ENCODE measurements at regions of chr15 and their contacts with region 1.

Region 1: DNA sequence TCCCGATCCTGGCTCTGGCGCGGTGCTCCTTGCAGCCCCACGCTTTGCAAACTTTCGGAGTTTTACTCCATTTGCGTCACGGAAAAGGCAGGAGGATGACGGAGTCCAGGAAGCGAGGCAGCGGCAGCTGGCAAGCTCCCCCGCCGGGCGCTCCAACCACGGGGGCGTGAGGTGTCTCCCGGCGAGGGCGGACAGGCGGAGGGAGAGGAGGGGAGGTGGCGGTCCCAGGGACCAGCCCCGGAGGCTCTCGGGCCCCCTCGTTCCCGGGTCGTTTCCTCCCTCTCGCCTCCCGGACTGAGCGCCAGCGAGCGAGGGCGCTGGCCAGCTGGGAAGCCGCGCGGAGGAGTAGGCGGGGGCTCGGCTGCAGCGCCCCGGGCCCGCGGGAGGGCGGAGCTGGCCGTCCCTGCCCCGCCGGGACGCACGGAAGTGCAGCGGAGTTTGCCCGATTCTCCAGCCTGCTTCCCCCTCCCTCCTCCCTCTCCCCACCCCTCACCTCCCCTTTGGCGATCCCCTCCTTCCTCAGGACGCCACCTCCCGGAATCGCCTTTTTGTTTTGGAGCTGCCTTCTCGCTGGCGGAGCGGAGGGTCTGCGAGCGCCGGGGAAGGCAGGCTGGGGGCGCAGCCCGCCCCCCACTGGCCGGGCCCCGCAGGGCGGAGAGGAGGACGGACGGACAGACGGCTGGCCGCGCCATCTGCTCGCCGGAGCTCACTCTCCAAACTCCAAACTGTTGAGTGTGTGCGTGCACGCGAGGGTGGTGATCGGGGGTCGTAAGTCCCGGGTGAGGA is at the start of gene SNX33:
- DNase-seq: peak; percentile 77
- H3K4me3 Mint-ChIP-seq: peak within 1 kb of the TSS; percentile 87
- H3K27ac Mint-ChIP-seq: peak within 1 kb of the TSS; percentile 78
- H3K4me1 Mint-ChIP-seq: peaks cover 47% of the 10 kb centered on the region
- H3K27me3 Mint-ChIP-seq: no peaks in the 10 kb centered on the region
- CTCF ChIP-seq: peak; percentile 48
- total RNA-seq, gene SNX33: 14.3 and 15.2 TPM in 2 replicates

Region 2: GRCh38 chr15:74732846-74733245 is 914.7 kb before region 1 on chr15:
- CTCF ChIA-PET with region 1: no interaction called
- POLR2A ChIA-PET with region 1: no interaction called
- intact Hi-C with region 1: no loop called
- DNase-seq: no peak
- H3K4me3 Mint-ChIP-seq: no peak overlapping the region
- H3K27ac Mint-ChIP-seq: no peak overlapping the region
- H3K4me1 Mint-ChIP-seq: no peaks in the 10 kb centered on the region
- H3K27me3 Mint-ChIP-seq: peaks cover 28% of the 10 kb centered on the region
- CTCF ChIP-seq: no peak

Region 3: GRCh38 chr15:74857082-74857655 is 790.4 kb before region 1 on chr15:
- CTCF ChIA-PET with region 1: no interaction called
- POLR2A ChIA-PET with region 1: no interaction called
- intact Hi-C with region 1: no loop called
- DNase-seq: no peak
- H3K4me3 Mint-ChIP-seq: no peak overlapping the region
- H3K27ac Mint-ChIP-seq: no peak overlapping the region
- H3K4me1 Mint-ChIP-seq: no peaks in the 10 kb centered on the region
- H3K27me3 Mint-ChIP-seq: no peaks in the 10 kb centered on the region
- CTCF ChIP-seq: no peak

Region 4: GRCh38 chr15:75661091-75661777 is 13.7 kb after region 1 on chr15:
- CTCF ChIA-PET with region 1: interaction called, 9 read pairs
- POLR2A ChIA-PET with region 1: interaction called, 120 read pairs
- intact Hi-C with region 1: no loop called
- DNase-seq: peak; percentile 89
- H3K4me3 Mint-ChIP-seq: peak overlapping the region; percentile 40
- H3K27ac Mint-ChIP-seq: peak overlapping the region; percentile 97
- H3K4me1 Mint-ChIP-seq: peaks cover 47% of the 10 kb centered on the region
- H3K27me3 Mint-ChIP-seq: no peaks in the 10 kb centered on the region
- CTCF ChIP-seq: no peak

Region 5: DNA sequence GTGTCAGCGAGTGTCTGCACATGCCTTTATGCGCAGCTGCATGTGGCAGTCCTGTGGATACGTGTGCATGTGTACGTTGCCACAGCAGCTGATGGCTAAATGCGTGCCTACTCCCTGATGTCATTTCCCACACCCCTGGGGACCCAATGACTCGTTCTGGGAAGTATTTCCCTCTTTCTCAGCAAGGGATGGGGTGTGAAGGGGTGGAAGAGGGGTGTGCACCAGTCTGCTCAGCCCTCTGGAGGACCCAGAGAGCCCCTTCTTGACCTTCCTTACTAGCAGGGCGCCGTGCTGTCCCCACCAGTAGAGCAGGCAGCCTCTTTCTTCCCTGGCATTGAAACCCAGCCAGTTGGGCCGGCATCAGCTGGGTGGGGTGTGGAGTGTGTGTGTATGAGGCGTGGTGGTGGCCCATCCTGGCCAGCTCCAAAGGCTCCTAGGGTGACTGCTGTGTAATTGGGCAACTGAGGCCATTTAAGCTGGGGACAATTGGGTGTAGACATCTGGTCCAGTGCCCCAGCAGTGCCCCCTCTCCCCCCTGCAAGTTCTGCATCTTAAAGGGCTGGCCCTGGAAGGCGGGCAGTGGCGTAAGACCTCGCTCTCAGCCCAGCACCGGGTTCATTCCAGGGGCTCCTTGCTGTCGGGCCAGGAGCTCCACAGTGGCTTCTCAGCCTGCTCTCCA is 19.4 kb after region 1 on chr15:
- CTCF ChIA-PET with region 1: interaction called, 9 read pairs
- POLR2A ChIA-PET with region 1: interaction called, 120 read pairs
- intact Hi-C with region 1: no loop called
- DNase-seq: peak; percentile 93
- H3K4me3 Mint-ChIP-seq: peak overlapping the region; percentile 65
- H3K27ac Mint-ChIP-seq: peak overlapping the region; percentile 100
- H3K4me1 Mint-ChIP-seq: peaks cover 57% of the 10 kb centered on the region
- H3K27me3 Mint-ChIP-seq: no peaks in the 10 kb centered on the region
- CTCF ChIP-seq: no peak